CD4-positive, alpha-beta T cell (primary cell): ENCODE measurements at regions of chr20 and their contacts with region 1.

Region 1: GRCh38 chr20:57432874-57433491 is 41.8 kb downstream of the RBM38 start:
- DNase-seq: peak in 13 of 14 experiments; percentile 30 to 94 (median 64)
- ATAC-seq: peak; percentile 89
- H3K4me3 ChIP-seq: no peak overlapping the region
- H3K4me3 Mint-ChIP-seq: peak overlapping the region; percentile 81
- H3K27ac ChIP-seq: peak overlapping the region; percentile 56 to 72
- H3K27ac Mint-ChIP-seq: peak overlapping the region; percentile 88
- H3K4me1 ChIP-seq: peaks cover 79% of the 10 kb centered on the region
- H3K4me1 Mint-ChIP-seq: peaks cover 67% of the 10 kb centered on the region
- H3K27me3 ChIP-seq: no peaks in the 10 kb centered on the region
- H3K27me3 Mint-ChIP-seq: no peaks in the 10 kb centered on the region
- CTCF ChIP-seq: no peak

Region 2: DNA sequence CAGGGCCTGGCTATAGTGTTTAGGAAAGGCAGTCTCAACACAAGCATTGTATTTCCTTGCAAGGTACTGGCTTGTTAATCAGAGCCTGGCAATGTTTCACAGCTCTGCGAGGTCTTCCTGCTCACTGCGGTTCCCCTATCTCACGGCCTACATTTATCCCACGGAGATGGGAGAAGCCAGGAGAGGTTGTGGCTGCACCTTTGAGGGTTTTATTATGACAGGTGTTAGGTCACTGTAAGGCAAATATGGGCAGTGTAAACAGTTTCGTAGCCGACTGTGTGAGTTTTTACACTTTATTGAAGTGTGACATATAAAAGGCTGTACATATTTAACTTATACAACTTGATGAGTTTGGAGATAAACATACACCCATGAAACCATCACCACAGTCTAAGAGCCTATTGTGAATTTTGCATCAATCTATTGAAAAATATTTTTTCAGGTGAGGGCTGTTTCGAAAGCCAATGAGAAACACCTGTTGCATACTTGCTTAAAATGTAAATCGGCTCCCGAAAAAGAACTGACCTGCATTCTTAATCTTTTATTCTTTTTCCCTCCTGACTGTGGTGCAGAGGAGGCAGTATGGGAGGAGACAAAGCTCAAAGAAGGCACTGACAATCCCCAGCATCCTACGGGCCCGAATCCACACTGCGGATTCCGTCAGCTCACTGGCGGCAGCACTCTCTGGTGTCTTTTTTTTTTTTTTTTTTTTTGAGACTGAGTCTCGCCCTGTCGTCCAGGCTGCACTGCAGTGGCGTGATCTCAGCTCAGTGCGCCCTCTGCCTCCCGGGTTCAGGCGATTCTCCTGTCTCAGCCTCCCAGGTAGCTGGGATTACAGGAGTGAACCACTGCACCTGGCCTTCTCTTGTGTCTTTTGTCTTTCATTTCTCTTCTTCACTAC is 49.3 kb before region 1 on chr20:
- CTCF ChIA-PET with region 1: interaction called, 10 read pairs
- POLR2A ChIA-PET with region 1: interaction called, 83 read pairs
- intact Hi-C with region 1: loop called in 1 of 2 experiments (anchors 2 kb)
- DNase-seq: peak in 1 of 14 experiments; percentile 30
- ATAC-seq: no peak
- H3K4me3 ChIP-seq: no peak overlapping the region
- H3K4me3 Mint-ChIP-seq: no peak overlapping the region
- H3K27ac ChIP-seq: no peak overlapping the region
- H3K27ac Mint-ChIP-seq: no peak overlapping the region
- H3K4me1 ChIP-seq: peaks cover 16% of the 10 kb centered on the region
- H3K4me1 Mint-ChIP-seq: peaks cover 23% of the 10 kb centered on the region
- H3K27me3 ChIP-seq: no peaks in the 10 kb centered on the region
- H3K27me3 Mint-ChIP-seq: no peaks in the 10 kb centered on the region
- CTCF ChIP-seq: no peak

Region 3: GRCh38 chr20:57493091-57493615 is 60.2 kb after region 1 on chr20:
- CTCF ChIA-PET with region 1: no interaction called
- POLR2A ChIA-PET with region 1: no interaction called
- intact Hi-C with region 1: loop called in 1 of 2 experiments (anchors 5 kb)
- DNase-seq: no peak
- ATAC-seq: no peak
- H3K4me3 ChIP-seq: no peak overlapping the region
- H3K4me3 Mint-ChIP-seq: no peak overlapping the region
- H3K27ac ChIP-seq: no peak overlapping the region
- H3K27ac Mint-ChIP-seq: no peak overlapping the region
- H3K4me1 ChIP-seq: peaks cover 6% of the 10 kb centered on the region
- H3K4me1 Mint-ChIP-seq: peaks cover 6% of the 10 kb centered on the region
- H3K27me3 ChIP-seq: peaks cover 5% of the 10 kb centered on the region in 2 experiments
- H3K27me3 Mint-ChIP-seq: peaks cover 7% of the 10 kb centered on the region
- CTCF ChIP-seq: no peak

Region 4: DNA sequence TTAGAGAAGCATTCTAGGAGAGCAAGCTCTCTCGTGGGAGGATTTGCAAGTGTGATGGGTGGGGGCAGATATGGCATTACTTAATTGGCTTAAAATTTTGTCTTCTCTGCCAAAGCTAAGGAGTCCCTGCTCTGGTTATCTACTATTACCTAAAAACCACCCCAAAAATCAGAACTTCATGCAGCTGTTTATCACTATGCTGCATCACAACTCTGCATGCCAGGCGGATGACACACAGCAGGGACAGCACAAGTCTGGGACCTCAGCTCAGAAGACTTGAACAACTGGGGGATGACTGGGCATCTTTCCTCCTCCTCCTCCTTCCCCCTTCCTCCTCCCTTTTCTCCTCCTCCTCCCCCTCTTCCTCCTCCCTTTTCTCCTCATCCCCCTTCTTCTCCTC is 495.2 kb after region 1 on chr20:
- CTCF ChIA-PET with region 1: no interaction called
- POLR2A ChIA-PET with region 1: no interaction called
- intact Hi-C with region 1: no loop called
- DNase-seq: no peak
- ATAC-seq: no peak
- H3K4me3 ChIP-seq: no peak overlapping the region
- H3K4me3 Mint-ChIP-seq: no peak overlapping the region
- H3K27ac ChIP-seq: no peak overlapping the region
- H3K27ac Mint-ChIP-seq: no peak overlapping the region
- H3K4me1 ChIP-seq: no peaks in the 10 kb centered on the region
- H3K4me1 Mint-ChIP-seq: no peaks in the 10 kb centered on the region
- H3K27me3 ChIP-seq: peaks cover 3 to 9% of the 10 kb centered on the region in 2 experiments
- H3K27me3 Mint-ChIP-seq: peaks cover 16% of the 10 kb centered on the region
- CTCF ChIP-seq: no peak